A549 (cell line): ENCODE measurements at regions of chr11 and their contacts with region 1.

Region 1: DNA sequence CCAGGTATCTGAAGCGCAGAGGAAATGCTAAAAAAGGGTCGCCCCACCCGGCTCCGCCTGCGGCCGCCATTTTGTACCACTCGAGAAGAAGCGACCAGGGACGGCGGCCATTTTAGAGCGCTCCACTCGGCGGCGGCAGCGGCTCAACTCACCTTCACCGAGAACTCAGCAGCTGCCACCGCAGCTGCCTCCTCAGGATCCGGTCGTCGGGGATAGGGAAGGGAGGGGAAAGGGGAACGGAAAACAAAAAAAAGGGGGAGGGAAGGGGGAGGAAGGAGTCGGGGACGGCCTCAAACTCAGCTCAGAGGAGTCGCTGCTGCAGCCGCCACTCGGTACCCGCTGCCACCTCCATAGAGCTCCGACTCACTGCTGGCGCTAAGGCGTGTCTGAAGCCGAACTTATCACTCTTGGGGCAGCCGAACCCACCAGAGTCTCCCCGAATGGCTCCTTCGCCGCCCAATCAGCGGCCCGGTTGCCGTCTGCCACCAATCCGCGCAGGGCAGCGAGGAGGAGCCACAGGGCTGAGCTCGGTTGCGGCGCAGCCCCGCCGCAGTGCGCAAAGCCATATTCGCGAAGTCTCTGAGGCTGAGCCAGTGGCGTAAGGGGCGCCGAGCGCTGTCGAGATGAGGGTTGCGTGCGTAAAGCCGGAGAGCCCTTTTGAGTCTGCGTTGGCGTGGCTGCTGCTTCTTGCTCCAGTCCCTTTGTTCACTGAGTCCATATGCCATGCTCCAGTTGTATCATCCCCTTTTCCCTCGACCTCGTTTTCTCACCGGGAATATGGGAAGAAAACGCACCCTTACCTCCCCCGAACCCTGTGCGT is at the start of gene EIF4G2:
- DNase-seq: peak; percentile 98 to 99
- ATAC-seq: peak; percentile 96 to 98
- H3K4me3 ChIP-seq: peak within 1 kb of the TSS; percentile 97
- H3K27ac ChIP-seq: peak within 1 kb of the TSS; percentile 95 to 99
- H3K4me1 ChIP-seq: peaks cover 43% of the 10 kb centered on the region
- CTCF ChIP-seq: no peak
- EP300 ChIP-seq: peak in 1 of 2 experiments; percentile 17; a peak in 1 of 5 replicates
- POLR2A ChIP-seq: peak; percentile 98
- RAD21 ChIP-seq: peak in 1 of 2 experiments; percentile 12; a peak in 2 of 5 replicates
- polyA plus RNA-seq, gene EIF4G2: 1,171 and 1,351 TPM in 2 replicates

Region 2: GRCh38 chr11:10797531-10797930 is 11.2 kb before region 1 on chr11:
- CTCF ChIA-PET with region 1: interaction called, 59 read pairs
- POLR2A ChIA-PET with region 1: interaction called, 43 read pairs
- DNase-seq: no peak
- ATAC-seq: no peak
- H3K4me3 ChIP-seq: no peak overlapping the region
- H3K27ac ChIP-seq: no peak overlapping the region
- H3K4me1 ChIP-seq: peaks cover 35% of the 10 kb centered on the region
- CTCF ChIP-seq: no peak
- EP300 ChIP-seq: no peak
- POLR2A ChIP-seq: no peak
- RAD21 ChIP-seq: no peak

Region 3: GRCh38 chr11:10857709-10858438 is 49.1 kb after region 1 on chr11 and contains the start of gene ZBED5:
- CTCF ChIA-PET with region 1: interaction called, 10 read pairs
- POLR2A ChIA-PET with region 1: interaction called, 141 read pairs
- DNase-seq: peak; percentile 87 to 98
- ATAC-seq: peak; percentile 96
- H3K4me3 ChIP-seq: peak within 1 kb of the TSS; percentile 91
- H3K27ac ChIP-seq: peak within 1 kb of the TSS; percentile 95 to 98
- H3K4me1 ChIP-seq: peaks cover 36% of the 10 kb centered on the region
- CTCF ChIP-seq: no peak
- EP300 ChIP-seq: no peak
- POLR2A ChIP-seq: peak; percentile 76
- RAD21 ChIP-seq: peak; percentile 12; a peak in 1 of 5 replicates
- polyA plus RNA-seq, gene ZBED5: 132 and 142 TPM in 2 replicates

Region 4: GRCh38 chr11:10893714-10894151 is 85.0 kb after region 1 on chr11:
- CTCF ChIA-PET with region 1: interaction called, 4 read pairs
- POLR2A ChIA-PET with region 1: interaction called, 91 read pairs
- DNase-seq: peak; percentile 18 to 90
- ATAC-seq: peak; percentile 90 to 95
- H3K4me3 ChIP-seq: no peak overlapping the region
- H3K27ac ChIP-seq: peak overlapping the region; percentile 76 to 93
- H3K4me1 ChIP-seq: peaks cover 53% of the 10 kb centered on the region
- CTCF ChIP-seq: no peak; the same call in 2 of the 3 replicates
- EP300 ChIP-seq: peak; percentile 76 to 88; a peak in 3 of 5 replicates
- POLR2A ChIP-seq: no peak
- RAD21 ChIP-seq: peak in 1 of 2 experiments; percentile 54; a peak in 2 of 5 replicates

Region 5: DNA sequence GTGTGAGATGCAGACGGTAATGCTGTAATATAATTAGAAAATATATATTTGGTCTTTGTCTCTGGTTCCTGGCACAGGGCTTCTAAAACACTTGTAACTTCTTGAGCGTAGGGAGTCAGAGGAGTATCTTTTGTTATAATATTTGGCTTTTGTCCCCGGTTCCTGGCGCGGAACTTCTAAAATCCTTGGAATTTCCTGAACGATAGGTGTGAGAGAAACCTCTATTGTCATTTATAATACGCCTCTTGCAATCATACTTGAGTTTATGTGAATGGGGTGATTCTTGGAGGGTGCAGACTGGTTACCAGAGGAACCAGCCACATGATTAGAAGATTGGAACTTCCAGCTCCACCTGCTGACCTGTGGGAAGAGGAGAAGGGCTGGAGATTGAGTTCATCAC is 103.1 kb after region 1 on chr11:
- CTCF ChIA-PET with region 1: interaction called, 8 read pairs
- POLR2A ChIA-PET with region 1: interaction called, 32 read pairs
- DNase-seq: no peak
- ATAC-seq: no peak
- H3K4me3 ChIP-seq: no peak overlapping the region
- H3K27ac ChIP-seq: no peak overlapping the region; a peak in 1 of 6 replicates
- H3K4me1 ChIP-seq: peaks cover 19% of the 10 kb centered on the region
- CTCF ChIP-seq: no peak
- EP300 ChIP-seq: no peak
- POLR2A ChIP-seq: no peak
- RAD21 ChIP-seq: no peak

Region 6: DNA sequence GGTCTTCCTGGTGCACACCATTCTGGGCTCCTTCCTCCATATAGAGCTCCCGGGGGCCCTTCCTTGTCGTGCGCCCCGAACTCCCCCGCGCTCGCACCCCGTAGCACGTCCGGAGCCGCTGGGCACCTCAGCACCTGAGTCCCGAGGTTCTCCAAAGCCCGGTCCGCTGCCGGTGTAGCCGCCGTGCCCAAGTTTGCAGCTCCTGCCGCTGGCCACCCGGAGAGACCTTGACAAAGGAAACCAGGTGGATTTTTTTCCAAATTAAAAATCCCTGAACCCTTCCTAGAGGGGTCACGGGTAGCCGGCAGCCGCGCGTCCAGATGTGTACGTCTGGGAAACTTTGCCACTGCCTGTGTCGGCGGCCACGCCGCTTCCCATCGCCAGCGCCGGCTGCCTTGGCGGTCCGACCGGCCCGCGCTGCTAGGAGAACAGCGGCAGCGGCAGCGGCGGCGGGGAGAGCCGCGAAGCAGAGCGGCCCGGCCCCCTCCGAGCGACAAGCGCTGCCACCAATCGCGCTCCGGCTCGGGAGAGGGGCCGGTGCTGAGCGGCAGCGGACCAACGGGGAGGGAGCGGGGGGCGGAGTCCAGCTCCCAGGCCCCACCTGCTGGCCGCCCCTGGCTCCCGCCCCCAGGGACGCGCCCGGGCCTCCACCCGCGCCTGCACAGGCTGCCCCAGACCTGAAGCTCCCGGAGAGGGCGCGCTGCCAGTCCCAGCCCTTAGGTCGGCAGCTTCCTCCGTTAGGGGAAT is 813.0 kb after region 1 on chr11 and contains the start of gene GALNT18:
- CTCF ChIA-PET with region 1: no interaction called
- POLR2A ChIA-PET with region 1: interaction called, 10 read pairs
- DNase-seq: peak; percentile 92 to 94
- ATAC-seq: peak; percentile 82 to 94
- H3K4me3 ChIP-seq: peak within 1 kb of the TSS; percentile 56
- H3K27ac ChIP-seq: peak within 1 kb of the TSS; percentile 83 to 90
- H3K4me1 ChIP-seq: peaks cover 31% of the 10 kb centered on the region
- CTCF ChIP-seq: peak; percentile 26; the same call in 1 of the 3 replicates
- EP300 ChIP-seq: no peak
- POLR2A ChIP-seq: peak; percentile 79
- RAD21 ChIP-seq: peak; percentile 9 to 28; a peak in 1 of 5 replicates
- polyA plus RNA-seq, gene GALNT18: 6.7 TPM in 2 replicates